Caco-2 (cell line): ENCODE measurements at regions of chr3 and their contacts with region 1.

Region 1: DNA sequence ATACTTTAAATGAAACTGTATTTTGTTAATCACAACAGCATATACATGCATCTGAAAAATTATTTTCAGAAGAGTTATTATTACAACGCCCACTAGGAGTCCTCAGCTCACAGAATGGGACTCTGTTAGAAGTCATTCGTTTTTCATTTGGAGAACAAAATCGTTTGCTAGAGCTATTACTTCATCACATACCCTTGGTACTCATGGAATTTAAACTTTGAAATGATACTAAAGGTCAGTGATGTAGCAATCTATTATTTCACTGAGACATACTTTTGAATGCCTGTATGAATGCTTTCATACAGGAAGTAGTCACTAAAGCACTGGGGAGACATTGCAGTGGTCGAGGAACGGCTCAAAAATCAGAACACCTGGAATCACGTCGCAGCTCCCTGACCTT is 198.1 kb downstream of the MBNL1 start:
- DNase-seq: peak in 1 of 2 experiments; percentile 37
- H3K4me3 ChIP-seq: no peak overlapping the region
- H3K4me3 Mint-ChIP-seq: no peak overlapping the region
- H3K27ac Mint-ChIP-seq: no peak overlapping the region
- H3K4me1 ChIP-seq: no peaks in the 10 kb centered on the region
- H3K4me1 Mint-ChIP-seq: peaks cover 6% of the 10 kb centered on the region
- H3K27me3 ChIP-seq: no peaks in the 10 kb centered on the region
- H3K27me3 Mint-ChIP-seq: no peaks in the 10 kb centered on the region
- CTCF ChIP-seq: peak; percentile 40 to 52

Region 2: DNA sequence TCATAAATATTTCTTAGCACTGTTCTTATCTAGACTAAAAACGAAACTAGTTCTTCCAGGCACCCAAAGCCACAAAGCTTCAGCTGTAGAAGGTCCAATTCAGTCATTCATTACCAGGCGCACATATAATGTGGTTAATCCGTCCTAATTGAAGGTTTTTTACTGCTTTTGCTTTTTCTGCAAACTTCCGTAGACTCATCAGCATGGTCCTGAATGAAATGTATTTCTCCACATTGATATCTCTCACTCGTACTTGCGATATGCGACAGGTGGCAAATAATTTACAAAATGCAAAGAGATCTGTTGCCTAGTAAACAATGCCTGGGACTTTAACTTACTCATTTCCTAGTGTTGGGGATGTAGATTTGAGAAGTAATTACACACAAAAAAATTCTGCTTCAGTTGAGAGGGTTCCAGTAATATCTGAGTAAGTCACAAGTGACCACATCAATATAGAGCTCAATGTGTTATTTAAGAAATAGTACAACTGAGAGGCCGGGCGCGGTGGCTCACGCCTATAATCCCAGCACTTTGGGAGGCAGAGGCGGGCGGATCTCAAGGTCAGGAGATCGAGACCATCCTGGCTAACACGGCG is 273.0 kb before region 1 on chr3:
- CTCF ChIA-PET with region 1: no interaction called
- POLR2A ChIA-PET with region 1: interaction called, 12 read pairs
- intact Hi-C with region 1: no loop called
- DNase-seq: no peak
- H3K4me3 ChIP-seq: no peak overlapping the region
- H3K4me3 Mint-ChIP-seq: no peak overlapping the region
- H3K27ac Mint-ChIP-seq: no peak overlapping the region
- H3K4me1 ChIP-seq: peaks cover 4% of the 10 kb centered on the region; the same call in 1 of the 2 replicates
- H3K4me1 Mint-ChIP-seq: peaks cover 7% of the 10 kb centered on the region
- H3K27me3 ChIP-seq: no peaks in the 10 kb centered on the region
- H3K27me3 Mint-ChIP-seq: no peaks in the 10 kb centered on the region
- CTCF ChIP-seq: no peak